ENCODE measurements at regions of chr13 and their contacts with region 1.

Region 1: DNA sequence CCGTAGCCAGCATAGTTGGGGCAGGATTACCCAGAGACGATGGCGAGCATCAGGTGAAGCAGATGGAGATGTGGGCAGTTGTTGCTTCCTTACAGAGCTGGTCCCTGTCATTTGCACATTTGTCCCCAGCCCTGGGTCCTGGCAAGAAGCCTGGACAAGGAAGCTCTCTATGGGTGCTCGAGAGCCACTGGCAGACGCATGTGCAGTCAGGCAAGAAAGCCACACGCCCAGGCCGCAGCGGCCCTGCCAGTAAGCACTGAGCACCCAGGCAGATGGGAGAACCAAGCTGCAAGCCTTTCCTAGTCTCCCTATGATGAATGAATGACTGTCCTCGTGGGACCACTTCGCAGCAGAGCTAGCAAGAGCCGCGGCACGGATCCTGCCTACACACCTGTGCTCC is 182.8 kb downstream of the FOXO1 start:
- DNase-seq: peak; percentile 73
- H3K4me3 ChIP-seq: peak overlapping the region; percentile 33
- H3K27ac ChIP-seq: peak overlapping the region; percentile 24
- H3K4me1 ChIP-seq: peaks cover 77% of the 10 kb centered on the region
- CTCF ChIP-seq: no peak

Region 2: GRCh38 chr13:40494513-40494912 is 10.9 kb after region 1 on chr13:
- CTCF ChIA-PET with region 1: no interaction called
- POLR2A ChIA-PET with region 1: interaction called, 10 read pairs
- intact Hi-C with region 1: no loop called
- DNase-seq: peak; percentile 35
- H3K4me3 ChIP-seq: no peak overlapping the region
- H3K27ac ChIP-seq: no peak overlapping the region
- H3K4me1 ChIP-seq: peaks cover 46% of the 10 kb centered on the region
- CTCF ChIP-seq: no peak

Measured in OCI-LY7 (cell line).